Activated CD4-positive, alpha-beta memory T cell treated with anti-CD3 and anti-CD28 coated beads for 36 hours (primary cell): ENCODE measurements at regions of chr18 and their contacts with region 1.

Region 1: GRCh38 chr18:641224-641623 is 16.2 kb upstream of the TYMS start:
- DNase-seq: no peak
- H3K4me3 Mint-ChIP-seq: no peak overlapping the region
- H3K27ac Mint-ChIP-seq: no peak overlapping the region
- H3K4me1 Mint-ChIP-seq: peaks cover 4% of the 10 kb centered on the region
- H3K27me3 Mint-ChIP-seq: peaks cover 4% of the 10 kb centered on the region

Region 2: DNA sequence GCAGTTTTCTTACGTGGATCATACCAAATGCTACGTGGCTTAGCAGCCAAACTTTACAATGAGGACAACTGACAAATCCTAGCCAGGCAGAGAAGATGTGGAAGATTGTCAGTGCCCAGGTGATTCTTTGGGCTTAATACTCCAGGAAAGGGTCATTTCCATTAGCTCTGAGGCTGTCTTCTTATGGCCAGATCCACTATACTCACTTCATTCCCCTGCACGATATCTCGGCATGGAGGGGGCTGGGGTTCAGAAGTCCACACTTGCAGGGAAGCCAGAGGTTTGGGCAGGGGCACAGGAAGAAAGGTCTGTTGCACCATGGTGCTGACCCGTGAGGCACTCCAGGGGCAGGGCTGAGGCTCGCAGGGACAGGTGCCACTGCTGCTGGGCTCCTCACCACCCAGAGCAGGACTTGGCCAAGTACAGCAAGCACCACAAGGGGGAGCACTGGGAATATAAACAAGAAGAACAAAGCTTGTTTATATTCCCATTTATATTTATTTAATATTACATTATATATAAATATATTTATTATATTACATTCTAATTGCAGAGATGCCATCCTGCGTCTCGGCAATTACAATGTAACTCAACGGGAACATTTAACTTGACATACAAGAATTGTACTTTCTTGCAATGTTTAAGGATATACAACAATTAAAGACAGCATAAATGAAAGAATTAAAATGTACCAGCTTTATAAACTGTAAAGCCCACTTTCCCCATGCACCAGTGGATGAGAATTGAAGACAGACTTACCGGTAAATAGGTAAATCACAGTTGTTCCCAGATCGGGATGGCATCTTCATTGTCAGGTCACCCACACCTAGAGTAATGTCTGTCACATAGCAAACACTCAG is 17.2 kb before region 1 on chr18:
- CTCF ChIA-PET with region 1: interaction called, 10 read pairs
- POLR2A ChIA-PET with region 1: no interaction called
- intact Hi-C with region 1: no loop called
- DNase-seq: peak; percentile 69
- H3K4me3 Mint-ChIP-seq: no peak overlapping the region
- H3K27ac Mint-ChIP-seq: no peak overlapping the region
- H3K4me1 Mint-ChIP-seq: no peaks in the 10 kb centered on the region
- H3K27me3 Mint-ChIP-seq: peaks cover 10% of the 10 kb centered on the region